Esophagus muscularis mucosa (tissue), 4 donors: ENCODE measurements at regions of chr2 and their contacts with region 1.

Region 1: GRCh38 chr2:224284134-224284946 is 117.6 kb downstream of the FAM124B start:
- DNase-seq: no peak
- H3K4me3 ChIP-seq: no peak overlapping the region
- H3K27ac ChIP-seq: no peak overlapping the region
- H3K4me1 ChIP-seq: no peaks in the 10 kb centered on the region
- H3K27me3 ChIP-seq: no peaks in the 10 kb centered on the region
- CTCF ChIP-seq: peak; percentile 57 to 70 (median 68)
- EP300 ChIP-seq: no peak
- POLR2A ChIP-seq: no peak

Region 2: DNA sequence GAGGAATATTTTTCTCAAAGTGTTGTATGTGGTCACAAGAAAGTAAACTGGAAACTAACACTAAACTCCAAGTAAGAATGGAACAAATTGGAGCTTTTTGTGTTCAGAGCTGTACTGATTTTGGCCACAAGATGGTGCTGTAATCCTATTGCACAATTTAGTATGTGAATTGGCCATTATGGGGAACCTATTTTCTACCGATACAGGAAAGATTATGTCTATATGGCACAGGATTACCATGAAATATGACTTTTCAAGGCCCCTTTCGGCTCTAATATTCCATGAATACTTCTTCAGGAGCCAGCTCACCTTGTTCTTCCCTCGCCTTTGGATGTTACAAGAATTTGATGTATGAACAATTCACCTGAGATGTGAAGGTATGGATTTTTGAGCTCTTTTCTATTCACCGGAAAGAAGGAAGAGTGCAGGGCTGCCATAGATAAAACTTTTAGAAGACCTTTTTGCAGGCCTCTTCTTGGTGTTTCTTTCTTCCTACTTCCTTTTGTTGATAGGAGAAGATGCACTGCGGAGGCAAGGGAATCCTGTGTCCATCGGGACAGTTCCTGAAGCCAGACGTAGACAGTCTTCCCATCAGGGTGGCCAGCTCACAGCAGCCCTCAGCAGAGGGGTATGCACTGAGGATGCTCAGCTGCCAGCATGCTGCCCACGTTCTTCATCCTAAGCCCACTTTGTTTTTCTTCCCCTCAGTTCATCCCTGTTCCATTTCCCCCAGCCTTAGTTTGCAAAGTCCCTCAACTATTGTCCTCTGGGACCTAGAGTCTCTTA is 313.8 kb before region 1 on chr2:
- intact Hi-C with region 1: loop called (anchors 2 kb)
- DNase-seq: no peak
- H3K4me3 ChIP-seq: no peak overlapping the region
- H3K27ac ChIP-seq: no peak overlapping the region
- H3K4me1 ChIP-seq: peaks cover 0 to 5% (median 2%) of the 10 kb centered on the region in 4 donors
- H3K27me3 ChIP-seq: no peaks in the 10 kb centered on the region
- CTCF ChIP-seq: peak; percentile 83 to 91 (median 84)
- EP300 ChIP-seq: no peak
- POLR2A ChIP-seq: no peak

Region 3: GRCh38 chr2:223993621-223994232 is 290.6 kb before region 1 on chr2:
- intact Hi-C with region 1: loop called (anchors 1 kb)
- DNase-seq: no peak
- H3K4me3 ChIP-seq: no peak overlapping the region
- H3K27ac ChIP-seq: no peak overlapping the region
- H3K4me1 ChIP-seq: peaks cover 0 to 10% (median 8%) of the 10 kb centered on the region in 4 donors
- H3K27me3 ChIP-seq: no peaks in the 10 kb centered on the region
- CTCF ChIP-seq: peak; percentile 75 to 83 (median 78)
- EP300 ChIP-seq: no peak
- POLR2A ChIP-seq: no peak